CD8-positive, alpha-beta T cell (primary cell): ENCODE measurements at regions of chr10 and their contacts with region 1.

Region 1: GRCh38 chr10:42552493-42553407 is 85.6 kb downstream of the ZNF33B start:
- DNase-seq: peak; percentile 86 to 97 (median 95)
- ATAC-seq: peak; percentile 94
- H3K4me3 ChIP-seq: peak overlapping the region; percentile 88 to 94
- H3K4me3 Mint-ChIP-seq: peak overlapping the region; percentile 98
- H3K27ac ChIP-seq: peak overlapping the region; percentile 75 to 85
- H3K27ac Mint-ChIP-seq: peak overlapping the region; percentile 97
- H3K4me1 ChIP-seq: peaks cover 23% of the 10 kb centered on the region
- H3K4me1 Mint-ChIP-seq: peaks cover 49% of the 10 kb centered on the region
- H3K27me3 ChIP-seq: no peaks in the 10 kb centered on the region
- H3K27me3 Mint-ChIP-seq: no peaks in the 10 kb centered on the region
- CTCF ChIP-seq: no peak

Region 2: DNA sequence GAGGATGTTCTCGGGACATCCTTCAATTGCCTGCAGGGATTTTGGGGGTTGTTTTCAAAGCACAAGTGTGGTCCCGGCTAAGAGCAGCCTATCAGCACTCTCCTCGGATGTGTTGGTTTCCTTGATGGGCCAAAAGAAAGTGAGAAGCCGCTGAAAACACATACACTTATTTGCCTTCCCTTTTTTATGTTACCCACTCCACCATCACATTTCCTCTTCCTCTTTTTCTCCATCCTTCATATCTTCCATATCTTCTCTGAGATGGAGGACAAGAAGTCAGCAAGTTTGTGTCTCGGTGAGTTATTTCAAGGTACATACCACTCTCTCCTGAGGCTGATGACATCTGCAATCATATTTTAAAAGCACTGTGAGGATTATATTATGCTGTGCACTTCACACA is 21.6 kb after region 1 on chr10:
- CTCF ChIA-PET with region 1: no interaction called
- POLR2A ChIA-PET with region 1: no interaction called
- intact Hi-C with region 1: no loop called
- DNase-seq: no peak
- ATAC-seq: no peak
- H3K4me3 ChIP-seq: no peak overlapping the region
- H3K4me3 Mint-ChIP-seq: no peak overlapping the region
- H3K27ac ChIP-seq: no peak overlapping the region
- H3K27ac Mint-ChIP-seq: no peak overlapping the region
- H3K4me1 ChIP-seq: no peaks in the 10 kb centered on the region
- H3K4me1 Mint-ChIP-seq: no peaks in the 10 kb centered on the region
- H3K27me3 ChIP-seq: no peaks in the 10 kb centered on the region
- H3K27me3 Mint-ChIP-seq: peaks cover 13% of the 10 kb centered on the region
- CTCF ChIP-seq: no peak

Region 3: DNA sequence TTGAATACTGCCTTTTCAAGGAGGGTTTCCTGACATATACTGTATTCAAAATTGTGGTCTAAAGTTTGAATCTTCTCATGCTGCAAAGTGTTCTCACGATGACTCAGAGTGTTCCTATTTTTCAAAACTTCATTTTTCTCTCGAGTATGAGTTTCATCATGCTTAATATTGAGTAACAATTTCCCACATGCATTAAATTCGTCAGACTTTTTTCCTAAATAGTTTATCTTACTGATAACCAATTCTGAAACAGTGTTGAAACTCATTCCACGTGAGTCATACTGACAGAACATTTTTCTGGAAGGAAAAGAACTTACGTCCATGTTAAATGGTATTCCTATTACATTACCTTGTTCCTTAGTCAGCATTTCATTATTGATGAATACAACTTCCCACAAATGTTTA is 41.5 kb after region 1 on chr10:
- CTCF ChIA-PET with region 1: no interaction called
- POLR2A ChIA-PET with region 1: no interaction called
- intact Hi-C with region 1: loop called in 1 of 2 experiments (anchors 5 kb)
- DNase-seq: no peak
- ATAC-seq: no peak
- H3K4me3 ChIP-seq: no peak overlapping the region
- H3K4me3 Mint-ChIP-seq: no peak overlapping the region
- H3K27ac ChIP-seq: no peak overlapping the region
- H3K27ac Mint-ChIP-seq: no peak overlapping the region
- H3K4me1 ChIP-seq: no peaks in the 10 kb centered on the region
- H3K4me1 Mint-ChIP-seq: no peaks in the 10 kb centered on the region
- H3K27me3 ChIP-seq: no peaks in the 10 kb centered on the region
- H3K27me3 Mint-ChIP-seq: no peaks in the 10 kb centered on the region
- CTCF ChIP-seq: no peak

Region 4: DNA sequence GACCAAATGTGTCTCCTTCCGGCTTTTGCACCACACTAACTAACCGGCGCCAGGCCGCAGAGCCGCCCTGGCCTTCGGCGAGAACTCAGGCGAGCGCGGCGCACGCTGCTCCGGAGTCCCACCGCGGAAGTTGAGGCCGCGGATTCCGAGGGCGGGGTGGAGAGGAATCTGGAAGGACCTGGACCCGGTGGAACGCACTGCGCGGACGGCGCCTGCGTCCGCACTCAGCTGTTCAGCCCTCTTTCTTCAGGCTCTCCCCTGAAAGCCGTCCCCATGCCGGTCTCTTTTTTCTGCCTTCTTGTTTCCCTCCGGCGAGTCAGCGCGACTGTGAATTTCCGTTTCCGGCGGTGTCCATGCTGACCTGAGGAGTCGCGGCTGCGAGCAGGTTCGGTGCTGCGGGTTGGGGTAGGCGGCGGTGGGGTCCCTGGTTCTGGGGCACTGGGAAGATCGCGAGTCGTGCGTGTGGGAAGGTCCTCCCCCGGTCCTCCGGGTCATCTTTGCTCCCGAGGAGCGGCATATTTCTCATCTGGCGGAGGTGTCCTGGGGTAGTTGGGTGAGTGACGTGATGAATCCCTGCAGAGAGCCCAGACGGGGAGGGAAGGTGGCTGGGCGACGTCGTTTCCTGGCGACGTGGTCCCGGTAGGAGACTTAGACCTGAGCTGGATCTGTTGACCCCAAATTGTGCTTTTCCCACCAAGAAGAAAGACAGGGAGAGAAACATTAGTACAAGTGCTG is 229.9 kb after region 1 on chr10 and contains the start of gene BMS1:
- CTCF ChIA-PET with region 1: no interaction called
- POLR2A ChIA-PET with region 1: interaction called, 3 read pairs
- intact Hi-C with region 1: loop called (anchors 1 kb)
- DNase-seq: peak; percentile 82 to 92 (median 87)
- ATAC-seq: peak; percentile 85
- H3K4me3 ChIP-seq: peak within 1 kb of the TSS; percentile 83 to 88
- H3K4me3 Mint-ChIP-seq: peak within 1 kb of the TSS; percentile 99
- H3K27ac ChIP-seq: peak within 1 kb of the TSS; percentile 78 to 90
- H3K27ac Mint-ChIP-seq: peak within 1 kb of the TSS; percentile 96
- H3K4me1 ChIP-seq: peaks cover 23% of the 10 kb centered on the region
- H3K4me1 Mint-ChIP-seq: peaks cover 42% of the 10 kb centered on the region
- H3K27me3 ChIP-seq: no peaks in the 10 kb centered on the region
- H3K27me3 Mint-ChIP-seq: peaks cover 4% of the 10 kb centered on the region
- CTCF ChIP-seq: no peak
- total RNA-seq, gene BMS1: 18.1 to 19.9 TPM

Region 5: GRCh38 chr10:43105102-43105785 is 552.5 kb after region 1 on chr10:
- CTCF ChIA-PET with region 1: no interaction called
- POLR2A ChIA-PET with region 1: no interaction called
- intact Hi-C with region 1: loop called in 1 of 2 experiments (anchors 1 kb)
- DNase-seq: peak; percentile 54 to 87 (median 71)
- ATAC-seq: peak; percentile 96
- H3K4me3 ChIP-seq: peak overlapping the region; percentile 56 to 72
- H3K4me3 Mint-ChIP-seq: peak overlapping the region; percentile 80
- H3K27ac ChIP-seq: no peak overlapping the region
- H3K27ac Mint-ChIP-seq: no peak overlapping the region
- H3K4me1 ChIP-seq: peaks cover 13% of the 10 kb centered on the region
- H3K4me1 Mint-ChIP-seq: peaks cover 8% of the 10 kb centered on the region
- H3K27me3 ChIP-seq: peaks cover 0 to 10% of the 10 kb centered on the region in 2 experiments
- H3K27me3 Mint-ChIP-seq: peaks cover 17% of the 10 kb centered on the region
- CTCF ChIP-seq: peak; percentile 98

Region 6: GRCh38 chr10:43574001-43574892 is 1021.5 kb after region 1 on chr10 and contains the start of gene ZNF239:
- CTCF ChIA-PET with region 1: no interaction called
- POLR2A ChIA-PET with region 1: no interaction called
- intact Hi-C with region 1: loop called (anchors 1 to 10 kb)
- DNase-seq: peak; percentile 62 to 93 (median 82)
- ATAC-seq: peak; percentile 88
- H3K4me3 ChIP-seq: peak within 1 kb of the TSS; percentile 43 to 63
- H3K4me3 Mint-ChIP-seq: peak within 1 kb of the TSS; percentile 85
- H3K27ac ChIP-seq: peak within 1 kb of the TSS; percentile 38 to 66
- H3K27ac Mint-ChIP-seq: peak within 1 kb of the TSS; percentile 90
- H3K4me1 ChIP-seq: peaks cover 25% of the 10 kb centered on the region
- H3K4me1 Mint-ChIP-seq: peaks cover 51% of the 10 kb centered on the region
- H3K27me3 ChIP-seq: no peaks in the 10 kb centered on the region
- H3K27me3 Mint-ChIP-seq: no peaks in the 10 kb centered on the region
- CTCF ChIP-seq: no peak
- total RNA-seq, gene ZNF239: 0.75 to 1.1 TPM

Region 7: DNA sequence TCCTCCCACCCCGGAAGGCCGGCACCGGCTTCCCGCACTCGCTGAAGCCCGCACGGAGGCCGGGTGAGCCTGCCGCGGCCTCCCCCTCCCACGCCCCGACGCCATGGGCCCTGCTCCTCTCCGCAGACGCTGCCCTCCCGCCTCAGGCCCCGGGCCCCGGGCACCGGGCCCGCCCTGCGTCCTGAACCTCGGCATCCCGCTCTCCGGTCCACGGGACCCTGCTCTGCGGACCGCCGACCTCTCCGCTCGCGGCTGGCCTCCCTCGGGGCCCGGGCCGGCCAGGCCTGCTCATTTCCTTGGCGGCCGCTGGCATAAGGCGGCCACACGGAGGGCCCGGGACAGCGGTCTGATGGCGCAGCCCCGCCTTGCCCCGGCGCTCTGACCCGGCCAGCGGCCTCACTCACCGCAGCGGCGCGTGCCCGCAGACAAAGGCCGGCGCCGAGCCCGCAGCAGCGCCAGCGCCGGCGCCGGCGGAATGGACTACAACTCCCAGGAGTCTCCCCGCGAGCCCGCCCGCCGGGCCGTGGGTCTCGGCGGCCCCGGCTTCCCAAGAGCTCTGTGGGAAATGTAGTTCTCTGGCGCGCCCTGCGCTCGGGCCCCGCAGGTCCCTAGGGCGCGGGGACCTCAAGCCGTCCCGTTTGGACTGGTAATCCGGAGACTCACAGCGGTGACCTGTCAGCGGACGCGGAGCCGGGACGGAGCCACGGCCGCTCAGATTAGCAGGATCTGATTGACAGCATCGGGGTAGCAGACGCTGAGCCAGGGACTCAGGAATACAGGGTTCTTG is 1095.8 kb after region 1 on chr10 and contains the start of gene ZNF32:
- CTCF ChIA-PET with region 1: no interaction called
- POLR2A ChIA-PET with region 1: no interaction called
- intact Hi-C with region 1: loop called (anchors 2 kb)
- DNase-seq: peak; percentile 60 to 89 (median 79)
- ATAC-seq: peak; percentile 97
- H3K4me3 ChIP-seq: peak within 1 kb of the TSS; percentile 74 to 92
- H3K4me3 Mint-ChIP-seq: peak within 1 kb of the TSS; percentile 97
- H3K27ac ChIP-seq: peak within 1 kb of the TSS; percentile 48 to 80
- H3K27ac Mint-ChIP-seq: peak within 1 kb of the TSS; percentile 92
- H3K4me1 ChIP-seq: peaks cover 14% of the 10 kb centered on the region
- H3K4me1 Mint-ChIP-seq: peaks cover 23% of the 10 kb centered on the region
- H3K27me3 ChIP-seq: no peaks in the 10 kb centered on the region
- H3K27me3 Mint-ChIP-seq: peaks cover 1% of the 10 kb centered on the region
- CTCF ChIP-seq: no peak
- total RNA-seq, gene ZNF32: 17.4 to 18.9 TPM